RWPE1 (cell line): ENCODE measurements at regions of chr14 and their contacts with region 1.

Region 1: DNA sequence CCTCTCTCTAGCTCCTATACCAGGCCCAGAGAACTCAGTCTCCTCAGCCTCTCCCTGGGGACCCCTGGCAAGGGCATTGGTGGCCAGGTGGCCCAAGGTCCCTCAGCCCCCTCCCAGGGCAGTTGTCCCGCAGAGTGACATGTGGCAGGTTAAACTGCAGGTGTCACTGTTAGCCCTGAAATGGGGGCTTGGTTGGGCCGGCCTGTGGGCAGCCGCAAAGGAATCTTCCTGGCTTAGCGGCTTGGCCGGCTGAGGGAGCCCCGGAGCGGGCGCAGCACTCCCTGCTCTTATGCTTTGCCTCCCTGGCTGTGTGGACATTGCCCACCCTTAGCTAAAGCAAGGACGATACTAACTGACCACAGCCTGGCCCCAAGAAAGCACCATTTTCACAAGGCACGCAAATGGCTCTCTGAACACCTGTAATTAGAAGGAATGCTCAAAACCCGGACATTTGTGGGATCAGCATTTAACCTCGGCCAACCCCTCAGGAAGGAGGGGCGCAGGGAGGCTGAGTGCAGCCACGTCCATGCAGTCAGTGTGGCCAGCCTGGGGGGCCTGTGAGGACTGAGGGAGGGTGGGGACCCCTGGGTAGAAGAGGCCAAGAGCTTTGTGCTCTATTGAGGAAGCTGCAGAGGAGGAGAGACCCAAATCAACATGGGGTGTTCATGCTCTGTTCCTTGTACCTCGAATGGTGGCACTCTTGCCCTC is 82.2 kb downstream of the PAPOLA start:
- DNase-seq: peak; percentile 27
- H3K27ac ChIP-seq: no peak overlapping the region
- CTCF ChIP-seq: peak; percentile 41

Region 2: DNA sequence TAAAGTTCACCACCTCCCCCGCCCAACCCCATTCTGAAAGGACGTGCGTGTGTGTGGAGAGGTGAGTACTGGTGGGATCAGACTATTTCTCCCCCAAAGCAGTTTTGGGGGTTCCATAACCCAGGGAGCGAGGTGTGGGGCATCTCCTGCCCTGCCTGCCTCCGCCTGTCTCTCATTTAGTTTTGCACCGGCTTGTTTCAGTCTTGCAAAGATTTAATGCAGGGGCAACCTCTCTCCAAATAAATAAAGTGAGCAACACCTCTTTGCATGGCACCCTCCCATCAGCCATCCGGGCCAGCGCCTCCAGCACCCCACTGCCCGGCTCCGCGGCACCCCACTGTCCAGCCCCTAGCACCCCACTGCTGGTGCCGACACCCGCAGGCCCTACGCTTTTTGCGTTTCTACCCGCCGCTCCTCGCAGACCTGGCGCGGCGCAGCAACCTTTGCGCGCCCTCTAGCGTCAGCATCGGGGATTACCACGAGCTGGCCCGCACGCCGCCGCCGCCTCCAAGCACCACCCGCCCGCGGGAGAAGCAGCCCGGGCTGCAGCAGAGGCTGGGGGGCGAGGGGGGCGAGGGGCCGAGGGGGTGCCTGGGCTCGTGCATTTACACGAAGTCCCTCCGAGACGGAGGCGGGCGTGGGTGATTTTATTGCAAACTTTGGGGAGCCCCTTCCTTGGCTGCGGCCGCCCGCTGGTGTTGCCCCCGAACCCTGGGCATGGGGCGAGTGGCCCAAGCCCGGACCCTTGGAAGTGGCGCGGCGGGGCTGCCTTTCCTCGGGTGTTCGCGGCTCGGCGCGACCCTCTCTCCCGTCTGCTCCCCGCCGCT is 157.0 kb after region 1 on chr14:
- CTCF ChIA-PET with region 1: interaction called, 10 read pairs
- POLR2A ChIA-PET with region 1: no interaction called
- DNase-seq: peak; percentile 60
- H3K27ac ChIP-seq: no peak overlapping the region
- CTCF ChIP-seq: peak; percentile 94